ENCODE measurements at regions of chr3 and their contacts with region 1.

Region 1: DNA sequence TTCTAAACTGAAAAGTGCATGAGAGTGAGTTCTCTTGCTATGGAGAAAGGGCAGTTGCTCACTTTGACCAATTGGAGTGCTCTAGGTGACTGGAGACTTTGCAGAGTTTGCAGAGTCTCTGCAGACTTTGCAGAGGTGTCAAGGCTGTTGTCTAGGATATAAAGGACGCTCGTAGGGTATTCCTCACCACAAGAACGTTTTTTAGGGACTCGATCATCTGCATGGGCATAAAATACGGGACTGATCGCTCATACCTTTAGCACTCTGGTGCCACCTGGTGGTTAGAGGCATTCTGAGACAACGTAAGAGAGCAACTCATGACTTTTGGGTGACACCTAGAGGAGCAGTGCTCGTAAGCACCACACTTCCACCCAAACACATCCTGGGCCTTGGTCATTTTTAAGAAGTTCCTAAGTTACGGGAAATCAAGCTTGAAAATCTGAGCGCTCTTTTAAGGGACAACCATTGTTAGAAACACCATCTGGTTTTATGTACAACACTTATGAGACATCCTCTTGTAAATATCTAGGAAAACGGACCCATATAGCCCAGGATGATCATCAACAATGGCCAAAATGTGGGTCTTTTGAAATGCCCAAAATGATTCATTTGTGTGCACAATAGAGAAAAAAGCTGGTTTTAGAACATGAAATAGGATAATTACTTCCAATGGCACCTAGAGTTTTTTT is 51.6 kb upstream of the XCR1 start:
- DNase-seq: peak; percentile 95
- ATAC-seq: peak; percentile 99
- H3K4me3 Mint-ChIP-seq: peak overlapping the region; percentile 29
- H3K27ac Mint-ChIP-seq: peak overlapping the region; percentile 58
- H3K4me1 Mint-ChIP-seq: peaks cover 70% of the 10 kb centered on the region
- H3K27me3 Mint-ChIP-seq: no peaks in the 10 kb centered on the region

Region 2: GRCh38 chr3:45841757-45842491 is 236.9 kb before region 1 on chr3 and contains the start of gene LZTFL1:
- CTCF ChIA-PET with region 1: interaction called, 11 read pairs
- POLR2A ChIA-PET with region 1: no interaction called
- DNase-seq: peak; percentile 95
- ATAC-seq: peak; percentile 87
- H3K4me3 Mint-ChIP-seq: peak within 1 kb of the TSS; percentile 90
- H3K27ac Mint-ChIP-seq: peak within 1 kb of the TSS; percentile 82
- H3K4me1 Mint-ChIP-seq: peaks cover 30% of the 10 kb centered on the region
- H3K27me3 Mint-ChIP-seq: peaks cover 35% of the 10 kb centered on the region
- total RNA-seq, gene LZTFL1: 5.1 to 6.7 TPM

Region 3: DNA sequence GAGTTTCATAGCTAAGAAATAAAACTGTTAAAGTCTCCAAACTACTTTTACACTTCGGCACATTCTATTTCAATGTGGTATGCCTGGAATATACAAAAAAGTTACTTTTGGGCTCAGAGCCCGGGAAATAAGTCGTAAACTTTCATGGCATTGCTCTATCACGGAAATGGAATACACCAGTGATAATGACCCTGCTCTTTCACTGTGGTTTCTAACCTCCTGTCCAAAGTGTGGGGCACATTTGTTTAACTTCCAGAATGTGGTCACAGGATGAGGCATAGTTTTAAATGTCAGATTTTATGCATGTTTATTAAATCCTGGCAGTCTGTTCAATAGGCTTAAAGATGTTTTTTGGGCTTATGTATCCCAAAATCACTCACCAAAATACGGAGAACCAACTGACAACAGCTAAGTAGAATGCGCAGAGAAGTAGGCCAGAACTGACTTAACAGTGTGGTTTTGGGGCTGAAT is 130.5 kb before region 1 on chr3:
- CTCF ChIA-PET with region 1: interaction called, 389 read pairs
- POLR2A ChIA-PET with region 1: interaction called, 5 read pairs
- DNase-seq: no peak
- ATAC-seq: no peak
- H3K4me3 Mint-ChIP-seq: peak overlapping the region; percentile 34
- H3K27ac Mint-ChIP-seq: peak overlapping the region; percentile 88
- H3K4me1 Mint-ChIP-seq: peaks cover 97% of the 10 kb centered on the region
- H3K27me3 Mint-ChIP-seq: no peaks in the 10 kb centered on the region

Region 4: GRCh38 chr3:45995236-45996192 is 83.3 kb before region 1 on chr3 and contains the start of gene FYCO1:
- CTCF ChIA-PET with region 1: interaction called, 29 read pairs
- POLR2A ChIA-PET with region 1: no interaction called
- DNase-seq: peak; percentile 94
- ATAC-seq: peak; percentile 83
- H3K4me3 Mint-ChIP-seq: peak within 1 kb of the TSS; percentile 87
- H3K27ac Mint-ChIP-seq: peak within 1 kb of the TSS; percentile 92
- H3K4me1 Mint-ChIP-seq: peaks cover 62% of the 10 kb centered on the region
- H3K27me3 Mint-ChIP-seq: peaks cover 4% of the 10 kb centered on the region
- total RNA-seq, gene FYCO1: 16.6 to 19.5 TPM

Region 5: GRCh38 chr3:46089237-46090011 is 10.6 kb after region 1 on chr3:
- CTCF ChIA-PET with region 1: interaction called, 74 read pairs
- POLR2A ChIA-PET with region 1: no interaction called
- DNase-seq: no peak
- ATAC-seq: peak; percentile 37
- H3K4me3 Mint-ChIP-seq: no peak overlapping the region
- H3K27ac Mint-ChIP-seq: peak overlapping the region; percentile 53
- H3K4me1 Mint-ChIP-seq: peaks cover 75% of the 10 kb centered on the region
- H3K27me3 Mint-ChIP-seq: no peaks in the 10 kb centered on the region

Region 6: GRCh38 chr3:46163318-46164041 is 84.6 kb after region 1 on chr3:
- CTCF ChIA-PET with region 1: no interaction called
- POLR2A ChIA-PET with region 1: no interaction called
- DNase-seq: no peak
- ATAC-seq: no peak
- H3K4me3 Mint-ChIP-seq: no peak overlapping the region
- H3K27ac Mint-ChIP-seq: no peak overlapping the region
- H3K4me1 Mint-ChIP-seq: peaks cover 12% of the 10 kb centered on the region
- H3K27me3 Mint-ChIP-seq: peaks cover 36% of the 10 kb centered on the region

Region 7: GRCh38 chr3:46359733-46360493 is 281.1 kb after region 1 on chr3:
- CTCF ChIA-PET with region 1: interaction called, 10 read pairs
- POLR2A ChIA-PET with region 1: no interaction called
- DNase-seq: no peak
- ATAC-seq: peak; percentile 43
- H3K4me3 Mint-ChIP-seq: no peak overlapping the region
- H3K27ac Mint-ChIP-seq: no peak overlapping the region
- H3K4me1 Mint-ChIP-seq: peaks cover 74% of the 10 kb centered on the region
- H3K27me3 Mint-ChIP-seq: peaks cover 2% of the 10 kb centered on the region